ENCODE measurements at regions of chr11 and their contacts with region 1.

Region 1: GRCh38 chr11:27184458-27185312 is 144.1 kb downstream of the BBOX1 start:
- DNase-seq: no peak
- H3K4me3 ChIP-seq: no peak overlapping the region
- H3K4me1 ChIP-seq: no peaks in the 10 kb centered on the region
- H3K27me3 ChIP-seq: 0 out of 2 replicates have a peak, but pooled peaks cover 2% of the 10 kb centered on the region

Region 2: GRCh38 chr11:27028561-27028965 is 156.1 kb before region 1 on chr11:
- in situ Hi-C with region 1: no loop called
- DNase-seq: no peak
- H3K4me3 ChIP-seq: no peak overlapping the region
- H3K4me1 ChIP-seq: no peaks in the 10 kb centered on the region; the same call in 1 of the 2 replicates
- H3K27me3 ChIP-seq: no peaks in the 10 kb centered on the region

Region 3: DNA sequence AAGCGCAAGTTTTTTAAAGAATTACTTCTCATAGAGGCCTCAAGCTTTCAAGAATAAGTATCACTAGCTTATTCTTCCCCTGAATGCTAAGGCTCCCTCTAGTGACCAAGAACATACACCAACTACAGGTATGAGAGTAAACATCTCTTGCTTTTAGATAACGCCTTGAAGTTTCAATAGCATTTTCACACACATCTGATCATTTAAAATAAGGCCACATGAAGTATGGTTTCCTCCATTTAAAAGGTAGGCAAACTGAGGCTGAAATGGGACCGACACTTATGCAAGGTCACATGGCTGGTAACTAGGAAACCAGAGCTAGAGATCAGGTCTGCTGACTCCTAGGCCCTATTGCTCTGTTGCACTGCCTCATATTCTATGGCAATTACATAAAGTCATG is 111.8 kb after region 1 on chr11:
- in situ Hi-C with region 1: loop called (anchors 5 kb)
- DNase-seq: peak; percentile 16 to 78
- H3K4me3 ChIP-seq: no peak overlapping the region
- H3K4me1 ChIP-seq: peaks cover 10% of the 10 kb centered on the region
- H3K27me3 ChIP-seq: no peaks in the 10 kb centered on the region

Region 4: GRCh38 chr11:27485930-27486773 is 301.5 kb after region 1 on chr11:
- in situ Hi-C with region 1: loop called (anchors 5 kb)
- DNase-seq: peak; percentile 70 to 78
- H3K4me3 ChIP-seq: no peak overlapping the region
- H3K4me1 ChIP-seq: 0 out of 2 replicates have a peak, but pooled peaks cover 4% of the 10 kb centered on the region
- H3K27me3 ChIP-seq: no peaks in the 10 kb centered on the region

Measured in HAP-1 (cell line).